Natural killer cell (primary cell): ENCODE measurements at regions of chr6 and their contacts with region 1.

Region 1: GRCh38 chr6:31834434-31835198 is 7.1 kb downstream of the HSPA1B start:
- DNase-seq: peak; percentile 78 to 88
- ATAC-seq: peak; percentile 72 to 84 (median 74)
- H3K4me3 ChIP-seq: peak overlapping the region; percentile 97
- H3K4me3 Mint-ChIP-seq: peak overlapping the region; percentile 88
- H3K27ac ChIP-seq: peak overlapping the region; percentile 98
- H3K27ac Mint-ChIP-seq: peak overlapping the region; percentile 94 to 96
- H3K4me1 ChIP-seq: peaks cover 67% of the 10 kb centered on the region
- H3K4me1 Mint-ChIP-seq: peaks cover 47 to 48% of the 10 kb centered on the region in 2 donors
- H3K27me3 ChIP-seq: no peaks in the 10 kb centered on the region
- H3K27me3 Mint-ChIP-seq: no peaks in the 10 kb centered on the region
- CTCF ChIP-seq: no peak

Region 2: DNA sequence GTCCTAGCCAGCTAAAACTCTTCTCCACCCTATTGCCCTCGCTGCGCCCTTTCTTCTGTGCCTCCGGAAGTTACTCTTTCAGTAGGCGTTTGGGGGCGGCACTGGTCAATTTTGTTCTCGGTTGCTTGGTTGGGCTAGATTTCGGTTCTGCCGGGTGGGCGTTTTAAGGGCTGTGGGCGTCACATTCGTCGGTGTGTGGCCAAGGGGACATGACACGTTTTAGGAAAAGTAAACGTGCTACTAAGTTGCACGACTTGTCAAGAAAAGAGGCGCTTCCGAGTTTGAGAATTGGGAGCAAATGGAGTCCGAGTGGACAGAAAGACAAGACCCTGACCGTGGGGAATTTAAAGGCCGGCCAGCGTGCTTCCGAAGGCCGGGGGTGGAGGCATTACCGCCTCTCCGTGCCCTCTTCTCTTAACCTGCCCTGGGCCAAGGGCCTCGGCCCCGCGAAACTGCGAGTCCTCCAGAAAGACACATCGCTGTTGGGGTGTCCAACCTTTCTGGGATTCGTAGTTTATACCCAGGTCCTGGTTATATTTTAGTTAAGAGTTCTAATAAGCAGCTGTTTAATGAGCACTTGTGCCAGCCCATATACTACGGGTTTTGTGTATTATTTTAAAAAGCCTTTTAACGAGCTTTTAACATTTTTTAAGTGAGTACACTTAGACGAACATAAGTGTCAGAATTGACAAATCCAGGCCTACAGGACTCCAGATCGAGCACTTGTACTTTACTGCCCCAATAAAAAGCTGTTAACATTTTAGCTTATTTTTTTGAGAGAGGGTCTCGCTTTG is 181.5 kb before region 1 on chr6:
- intact Hi-C with region 1: loop called (anchors 2 kb)
- DNase-seq: no peak
- ATAC-seq: peak; percentile 72 to 84 (median 73)
- H3K4me3 ChIP-seq: peak overlapping the region; percentile 90
- H3K4me3 Mint-ChIP-seq: peak overlapping the region; percentile 95
- H3K27ac ChIP-seq: peak overlapping the region; percentile 99
- H3K27ac Mint-ChIP-seq: peak overlapping the region; percentile 95 to 96
- H3K4me1 ChIP-seq: peaks cover 32% of the 10 kb centered on the region
- H3K4me1 Mint-ChIP-seq: peaks cover 49 to 60% of the 10 kb centered on the region in 2 donors
- H3K27me3 ChIP-seq: no peaks in the 10 kb centered on the region
- H3K27me3 Mint-ChIP-seq: no peaks in the 10 kb centered on the region
- CTCF ChIP-seq: no peak

Region 3: DNA sequence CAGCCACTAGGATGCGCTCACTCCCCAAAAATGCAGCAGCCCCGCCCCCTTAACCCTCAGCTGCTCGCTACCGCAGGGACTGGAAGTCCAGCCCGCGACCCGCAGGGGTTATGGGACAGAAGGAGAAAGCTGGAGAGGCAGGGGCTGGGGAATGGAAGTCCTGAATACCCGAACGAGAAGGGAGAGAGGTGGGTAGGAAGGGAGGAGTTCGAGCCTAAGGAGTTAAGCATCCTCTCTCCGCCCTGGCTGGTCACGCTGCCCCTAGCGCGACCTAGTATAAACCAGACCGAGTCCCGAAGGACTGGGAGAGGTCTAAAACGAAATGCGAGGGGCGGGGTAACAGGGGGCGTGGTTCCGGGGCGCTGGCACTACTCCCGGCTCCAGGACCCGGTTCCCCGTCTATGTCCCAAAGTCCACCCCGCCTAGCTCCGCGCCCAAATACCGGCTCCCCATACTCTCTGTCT is 105.1 kb before region 1 on chr6:
- intact Hi-C with region 1: loop called (anchors 1 kb)
- DNase-seq: peak; percentile 81 to 90
- ATAC-seq: peak; percentile 69 to 83 (median 74)
- H3K4me3 ChIP-seq: peak overlapping the region; percentile 75
- H3K4me3 Mint-ChIP-seq: peak overlapping the region; percentile 97
- H3K27ac ChIP-seq: peak overlapping the region; percentile 64
- H3K27ac Mint-ChIP-seq: peak overlapping the region; percentile 90 to 91
- H3K4me1 ChIP-seq: peaks cover 65% of the 10 kb centered on the region
- H3K4me1 Mint-ChIP-seq: peaks cover 52 to 72% of the 10 kb centered on the region in 2 donors
- H3K27me3 ChIP-seq: no peaks in the 10 kb centered on the region
- H3K27me3 Mint-ChIP-seq: no peaks in the 10 kb centered on the region
- CTCF ChIP-seq: peak; percentile 93

Region 4: DNA sequence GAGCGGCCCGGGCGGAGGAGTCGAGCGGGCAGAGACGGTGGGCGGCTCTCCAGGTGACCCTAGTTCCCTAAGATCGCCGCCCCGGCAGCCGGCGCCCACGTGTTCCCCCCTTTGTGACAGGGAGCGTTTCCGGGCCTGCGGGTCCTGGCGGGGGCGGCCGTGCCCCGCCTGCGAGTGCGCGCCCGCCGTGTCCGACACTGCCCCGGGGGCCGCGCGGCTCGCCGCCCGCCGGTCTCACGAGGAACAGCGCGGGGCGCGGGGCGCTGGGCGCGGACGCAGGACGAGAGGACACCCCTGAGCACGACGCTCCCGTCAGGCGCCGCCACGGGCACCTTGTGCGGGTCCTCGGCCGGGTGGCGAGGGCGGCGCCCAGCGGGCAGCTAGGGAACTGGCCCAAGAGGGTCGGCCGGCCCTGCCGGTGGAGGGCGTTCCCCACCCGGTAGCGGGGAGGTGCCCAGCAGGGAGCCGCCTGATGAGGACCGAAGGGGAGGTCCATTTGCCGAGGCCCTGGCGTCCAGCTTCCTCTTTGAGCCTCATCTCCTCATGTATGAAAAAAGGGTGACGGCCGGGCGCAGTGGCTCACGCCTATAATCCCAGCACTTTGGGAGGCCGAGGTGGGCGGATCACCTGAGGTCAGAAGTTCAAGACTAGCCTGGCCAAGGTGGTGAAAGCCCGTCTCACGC is 38.9 kb before region 1 on chr6 and contains the start of gene VARS1:
- intact Hi-C with region 1: loop called (anchors 5 kb)
- DNase-seq: peak; percentile 90 to 92
- ATAC-seq: peak; percentile 94 to 98 (median 94)
- H3K4me3 ChIP-seq: peak within 1 kb of the TSS; percentile 67
- H3K4me3 Mint-ChIP-seq: peak within 1 kb of the TSS; percentile 91
- H3K27ac ChIP-seq: peak within 1 kb of the TSS; percentile 77
- H3K27ac Mint-ChIP-seq: peak within 1 kb of the TSS; percentile 96
- H3K4me1 ChIP-seq: peaks cover 34% of the 10 kb centered on the region
- H3K4me1 Mint-ChIP-seq: peaks cover 26 to 36% of the 10 kb centered on the region in 2 donors
- H3K27me3 ChIP-seq: no peaks in the 10 kb centered on the region
- H3K27me3 Mint-ChIP-seq: no peaks in the 10 kb centered on the region
- CTCF ChIP-seq: peak; percentile 74
- total RNA-seq, gene VARS1: 45.2 to 58.6 (median 49.2) TPM